Transverse colon (tissue), 4 donors: ENCODE measurements at regions of chr21 and their contacts with region 1.

Region 1: GRCh38 chr21:28135646-28136045 is 857.0 kb downstream of the LTN1 start:
- DNase-seq: no peak
- H3K4me3 ChIP-seq: no peak overlapping the region
- H3K27ac ChIP-seq: no peak overlapping the region
- H3K4me1 ChIP-seq: no peaks in the 10 kb centered on the region
- H3K27me3 ChIP-seq: no peaks in the 10 kb centered on the region
- CTCF ChIP-seq: no peak
- EP300 ChIP-seq: no peak
- POLR2A ChIP-seq: no peak

Region 2: GRCh38 chr21:28283641-28284490 is 148.2 kb after region 1 on chr21:
- in situ Hi-C with region 1: no loop called
- intact Hi-C with region 1: no loop called
- DNase-seq: no peak
- H3K4me3 ChIP-seq: no peak overlapping the region
- H3K27ac ChIP-seq: no peak overlapping the region
- H3K4me1 ChIP-seq: no peaks in the 10 kb centered on the region
- H3K27me3 ChIP-seq: no peaks in the 10 kb centered on the region
- CTCF ChIP-seq: no peak
- EP300 ChIP-seq: no peak
- POLR2A ChIP-seq: no peak

Region 3: GRCh38 chr21:28308516-28308915 is 172.9 kb after region 1 on chr21:
- in situ Hi-C with region 1: no loop called
- intact Hi-C with region 1: no loop called
- DNase-seq: no peak
- H3K4me3 ChIP-seq: no peak overlapping the region
- H3K27ac ChIP-seq: no peak overlapping the region
- H3K4me1 ChIP-seq: no peaks in the 10 kb centered on the region
- H3K27me3 ChIP-seq: no peaks in the 10 kb centered on the region
- CTCF ChIP-seq: no peak
- EP300 ChIP-seq: no peak
- POLR2A ChIP-seq: no peak

Region 4: GRCh38 chr21:29477941-29478340 is 1342.3 kb after region 1 on chr21:
- in situ Hi-C with region 1: no loop called
- intact Hi-C with region 1: loop called (anchors 5 kb)
- DNase-seq: no peak
- H3K4me3 ChIP-seq: no peak overlapping the region
- H3K27ac ChIP-seq: no peak overlapping the region
- H3K4me1 ChIP-seq: no peaks in the 10 kb centered on the region
- H3K27me3 ChIP-seq: no peaks in the 10 kb centered on the region
- CTCF ChIP-seq: no peak
- EP300 ChIP-seq: no peak
- POLR2A ChIP-seq: no peak